ENCODE measurements at regions of chr1 and their contacts with region 1.

Region 1: GRCh38 chr1:156451505-156452160 is 48.9 kb downstream of the MEF2D start:
- DNase-seq: no peak
- H3K4me3 ChIP-seq: no peak overlapping the region
- H3K27ac ChIP-seq: no peak overlapping the region
- H3K4me1 ChIP-seq: peaks cover under 1 to 5% of the 10 kb centered on the region in 2 donors
- H3K27me3 ChIP-seq: no peaks in the 10 kb centered on the region
- CTCF ChIP-seq: no peak
- POLR2A ChIP-seq: no peak

Region 2: DNA sequence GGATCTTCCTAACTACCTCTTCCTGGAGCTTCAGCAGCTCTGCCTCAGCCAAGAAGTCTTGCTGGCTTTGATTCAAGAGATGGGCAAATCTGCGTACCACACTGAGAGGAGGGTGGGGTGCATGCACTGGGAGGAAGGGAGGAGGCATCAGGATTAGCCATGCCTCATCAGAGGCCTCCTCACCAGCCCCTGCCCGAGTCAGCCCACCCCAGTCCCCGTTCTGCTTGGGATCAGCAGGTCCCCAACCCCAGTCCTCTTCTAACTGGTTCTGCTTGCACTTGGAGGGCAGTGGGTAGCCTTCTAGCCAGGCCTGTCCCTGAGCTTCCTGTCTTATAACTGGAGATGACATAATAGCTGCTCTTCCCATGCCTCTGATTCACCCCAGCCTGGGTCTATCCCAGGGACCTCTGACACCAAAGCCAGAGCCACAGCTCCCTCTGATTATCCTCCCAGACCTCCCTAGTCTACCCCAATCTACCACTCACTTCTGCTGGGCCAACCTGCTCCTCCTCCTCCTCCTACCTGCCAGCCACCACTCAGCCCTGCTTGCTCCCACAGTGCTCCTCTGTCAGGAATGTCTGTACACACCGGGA is 89.3 kb after region 1 on chr1:
- intact Hi-C with region 1: no loop called
- DNase-seq: peak in 3 of 7 donors; percentile 39 to 46 (median 41)
- H3K4me3 ChIP-seq: no peak overlapping the region
- H3K27ac ChIP-seq: no peak overlapping the region
- H3K4me1 ChIP-seq: no peaks in the 10 kb centered on the region
- H3K27me3 ChIP-seq: no peaks in the 10 kb centered on the region
- CTCF ChIP-seq: no peak
- POLR2A ChIP-seq: no peak

Region 3: DNA sequence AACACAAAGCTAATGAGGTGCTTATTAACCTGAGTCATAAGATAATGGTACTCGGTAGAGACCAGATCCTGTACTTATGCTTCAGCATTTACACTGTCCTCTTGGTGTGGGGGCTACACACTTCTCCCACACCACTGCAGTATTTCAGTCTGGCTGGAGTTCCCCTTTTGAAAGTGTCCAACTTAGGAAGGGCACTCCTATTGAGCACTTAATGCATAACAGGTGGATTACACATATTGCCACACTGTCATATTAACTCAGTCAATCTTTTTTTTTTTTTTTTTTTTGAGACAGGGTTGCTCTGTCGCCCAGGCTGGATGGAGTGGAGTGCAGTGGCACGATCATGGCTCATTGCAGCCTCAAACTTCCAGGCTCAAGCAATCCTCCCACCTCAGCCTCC is 148.2 kb after region 1 on chr1:
- intact Hi-C with region 1: loop called in 1 of 2 experiments (anchors 5 kb)
- DNase-seq: no peak
- H3K4me3 ChIP-seq: no peak overlapping the region
- H3K27ac ChIP-seq: no peak overlapping the region
- H3K4me1 ChIP-seq: peaks cover 6 to 16% of the 10 kb centered on the region in 2 donors
- H3K27me3 ChIP-seq: no peaks in the 10 kb centered on the region
- CTCF ChIP-seq: peak in 2 of 6 experiments; percentile 6 to 8
- POLR2A ChIP-seq: no peak

Region 4: GRCh38 chr1:156612666-156613065 is 161.0 kb after region 1 on chr1:
- intact Hi-C with region 1: loop called in 1 of 2 experiments (anchors 5 kb)
- DNase-seq: no peak
- H3K4me3 ChIP-seq: no peak overlapping the region
- H3K27ac ChIP-seq: no peak overlapping the region
- H3K4me1 ChIP-seq: peaks cover 4 to 10% of the 10 kb centered on the region in 2 donors
- H3K27me3 ChIP-seq: peaks cover 10% of the 10 kb centered on the region
- CTCF ChIP-seq: no peak
- POLR2A ChIP-seq: no peak

Region 5: DNA sequence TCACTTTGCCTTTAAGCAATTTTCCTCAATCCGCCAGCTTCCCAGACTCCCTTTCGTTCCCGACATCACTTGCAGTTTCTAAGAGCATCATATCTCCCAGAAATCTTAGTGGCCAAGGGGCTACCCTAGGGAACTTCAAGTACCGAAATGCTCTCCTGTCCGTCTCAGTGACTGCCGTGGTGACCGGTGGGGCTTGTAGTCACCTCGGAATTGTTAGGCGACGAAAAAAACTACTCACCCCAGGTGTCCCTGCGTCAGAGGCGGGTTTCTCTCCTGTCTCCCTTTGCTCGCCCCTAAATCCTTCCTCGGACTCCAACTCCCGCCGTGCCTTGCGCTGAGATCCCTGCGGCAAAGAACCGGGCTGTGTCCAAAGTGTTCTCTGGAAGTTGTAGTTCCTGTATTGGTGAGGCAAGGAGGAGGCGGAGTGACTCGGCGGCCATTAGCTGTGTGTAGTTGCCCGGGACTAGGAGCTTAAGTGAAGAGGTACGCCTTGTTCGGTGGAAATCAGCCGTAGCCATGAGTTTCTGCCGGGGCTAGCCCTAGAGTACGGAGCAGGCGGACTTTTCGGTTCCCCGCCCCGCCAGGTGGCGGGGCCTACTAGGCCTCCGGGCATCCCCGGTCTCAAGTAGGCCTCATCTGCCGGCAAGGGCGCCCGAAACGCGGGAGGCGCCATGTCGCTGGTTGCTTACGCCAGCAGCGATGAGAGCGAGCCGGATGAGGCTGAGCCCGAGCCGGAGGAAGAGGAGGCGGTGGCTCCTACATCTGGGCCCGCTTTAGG is 315.7 kb after region 1 on chr1 and contains the start of gene PRCC:
- intact Hi-C with region 1: no loop called
- DNase-seq: peak; percentile 97 to 99 (median 99)
- H3K4me3 ChIP-seq: peak within 1 kb of the TSS; percentile 68 to 95 (median 84)
- H3K27ac ChIP-seq: peak within 1 kb of the TSS; percentile 81 to 97 (median 90)
- H3K4me1 ChIP-seq: peaks cover 17 to 48% of the 10 kb centered on the region in 2 donors
- H3K27me3 ChIP-seq: no peaks in the 10 kb centered on the region
- CTCF ChIP-seq: peak in 1 of 6 experiments; percentile 2
- POLR2A ChIP-seq: peak; percentile 63 to 64
- total RNA-seq, gene PRCC: 35.9 to 77.5 (median 56.9) TPM

Measured in adrenal gland (tissue), 19 donors.